ENCODE measurements at regions of chr12 and their contacts with region 1.

Region 1: GRCh38 chr12:79415746-79416435 is 274.9 kb downstream of the PAWR start:
- DNase-seq: peak in 3 of 4 donors; percentile 34 to 57 (median 54)
- ATAC-seq: peak; percentile 80
- H3K4me3 ChIP-seq: no peak overlapping the region
- H3K27ac ChIP-seq: peak overlapping the region in 2 of 4 donors; percentile 39 to 40
- H3K4me1 ChIP-seq: peaks cover 13% of the 10 kb centered on the region
- H3K27me3 ChIP-seq: no peaks in the 10 kb centered on the region
- CTCF ChIP-seq: no peak
- POLR2A ChIP-seq: no peak

Region 2: GRCh38 chr12:79747274-79747673 is 331.4 kb after region 1 on chr12:
- intact Hi-C with region 1: loop called (anchors 10 kb)
- DNase-seq: no peak
- ATAC-seq: no peak
- H3K4me3 ChIP-seq: no peak overlapping the region
- H3K27ac ChIP-seq: no peak overlapping the region
- H3K4me1 ChIP-seq: no peaks in the 10 kb centered on the region
- H3K27me3 ChIP-seq: no peaks in the 10 kb centered on the region
- CTCF ChIP-seq: no peak
- POLR2A ChIP-seq: no peak

Region 3: DNA sequence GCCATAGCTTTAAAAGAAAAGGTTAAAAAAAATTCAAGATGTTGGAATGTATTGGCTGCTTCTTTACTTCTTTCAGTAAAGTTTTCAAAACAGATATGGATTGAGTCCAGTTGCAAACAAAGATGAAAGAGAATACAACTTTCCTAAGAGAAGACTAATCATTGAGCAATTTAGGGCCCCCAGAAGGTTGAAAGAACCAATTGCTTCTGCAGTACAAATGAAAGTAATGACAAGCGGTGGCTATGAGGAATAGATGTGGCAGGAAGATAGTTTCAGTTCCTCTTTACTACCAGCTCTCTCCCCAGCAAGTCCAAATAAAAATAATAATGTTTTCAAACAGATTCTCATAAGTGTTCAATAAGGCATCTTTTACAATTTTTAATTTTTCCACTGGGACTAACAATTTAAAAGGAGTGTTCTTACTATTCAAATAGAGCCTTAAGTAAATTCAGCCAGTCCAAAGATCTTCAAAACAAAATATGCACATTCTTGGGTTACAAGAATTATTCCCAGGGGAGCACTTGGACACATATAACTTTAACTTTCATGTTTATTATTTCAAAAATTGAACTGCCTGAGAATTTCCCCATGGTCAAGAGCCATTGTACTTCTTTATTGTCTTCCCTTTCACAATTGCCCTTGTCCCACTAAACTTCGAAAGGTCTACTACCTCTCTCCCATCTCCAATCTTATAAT is 581.4 kb after region 1 on chr12:
- intact Hi-C with region 1: no loop called
- DNase-seq: no peak
- ATAC-seq: no peak
- H3K4me3 ChIP-seq: no peak overlapping the region
- H3K27ac ChIP-seq: no peak overlapping the region
- H3K4me1 ChIP-seq: no peaks in the 10 kb centered on the region
- H3K27me3 ChIP-seq: no peaks in the 10 kb centered on the region
- CTCF ChIP-seq: no peak
- POLR2A ChIP-seq: no peak